Transverse colon (tissue), 4 donors: ENCODE measurements at regions of chr6 and their contacts with region 1.

Region 1: GRCh38 chr6:27132532-27133280 is 114.8 kb upstream of the PRSS16 start:
- DNase-seq: peak; percentile 94
- H3K4me3 ChIP-seq: peak overlapping the region; percentile 32 to 66 (median 50)
- H3K27ac ChIP-seq: peak overlapping the region; percentile 95 to 98 (median 97)
- H3K4me1 ChIP-seq: peaks cover 0 to 23% (median 17%) of the 10 kb centered on the region in 4 donors
- H3K27me3 ChIP-seq: no peaks in the 10 kb centered on the region
- CTCF ChIP-seq: no peak
- EP300 ChIP-seq: no peak
- POLR2A ChIP-seq: peak; percentile 99

Region 2: GRCh38 chr6:26025894-26026832 is 1106.5 kb before region 1 on chr6:
- in situ Hi-C with region 1: loop called in 3 of 4 experiments (anchors 25 kb)
- intact Hi-C with region 1: no loop called
- DNase-seq: peak; percentile 98
- H3K4me3 ChIP-seq: peak overlapping the region; percentile 48 to 66 (median 55)
- H3K27ac ChIP-seq: peak overlapping the region; percentile 90 to 98 (median 96)
- H3K4me1 ChIP-seq: peaks cover 0 to 25% (median 18%) of the 10 kb centered on the region in 4 donors
- H3K27me3 ChIP-seq: no peaks in the 10 kb centered on the region
- CTCF ChIP-seq: peak; percentile 73 to 97 (median 88)
- EP300 ChIP-seq: no peak
- POLR2A ChIP-seq: no peak

Region 3: DNA sequence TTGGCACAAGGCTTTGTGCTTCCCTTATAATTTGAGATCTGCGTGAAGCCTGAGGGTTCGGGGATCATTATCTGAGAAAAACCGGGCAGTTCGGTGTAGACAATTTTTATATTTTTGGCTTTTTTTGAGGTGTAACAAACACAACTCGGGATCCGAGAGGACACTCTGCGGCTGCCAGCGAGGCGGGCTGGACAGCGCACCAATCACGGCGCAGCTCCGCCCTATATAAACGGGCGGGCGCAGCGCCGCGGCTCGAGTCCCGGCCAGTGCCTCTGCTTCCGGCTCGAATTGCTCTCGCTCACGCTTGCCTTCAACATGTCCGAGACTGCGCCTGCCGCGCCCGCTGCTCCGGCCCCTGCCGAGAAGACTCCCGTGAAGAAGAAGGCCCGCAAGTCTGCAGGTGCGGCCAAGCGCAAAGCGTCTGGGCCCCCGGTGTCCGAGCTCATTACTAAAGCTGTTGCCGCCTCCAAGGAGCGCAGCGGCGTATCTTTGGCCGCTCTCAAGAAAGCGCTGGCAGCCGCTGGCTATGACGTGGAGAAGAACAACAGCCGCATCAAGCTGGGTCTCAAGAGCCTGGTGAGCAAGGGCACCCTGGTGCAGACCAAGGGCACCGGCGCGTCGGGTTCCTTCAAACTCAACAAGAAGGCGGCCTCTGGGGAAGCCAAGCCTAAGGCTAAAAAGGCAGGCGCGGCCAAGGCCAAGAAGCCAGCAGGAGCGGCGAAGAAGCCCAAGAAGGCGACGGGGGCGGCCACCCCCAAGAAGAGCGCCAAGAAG is 976.4 kb before region 1 on chr6:
- in situ Hi-C with region 1: loop called in 1 of 4 experiments (anchors 25 kb)
- intact Hi-C with region 1: no loop called
- DNase-seq: peak; percentile 94
- H3K4me3 ChIP-seq: peak overlapping the region; percentile 70 to 91 (median 80)
- H3K27ac ChIP-seq: peak overlapping the region; percentile 97 to 100 (median 100)
- H3K4me1 ChIP-seq: peaks cover 0 to 36% (median 14%) of the 10 kb centered on the region in 4 donors
- H3K27me3 ChIP-seq: no peaks in the 10 kb centered on the region
- CTCF ChIP-seq: no peak
- EP300 ChIP-seq: peak; percentile 71
- POLR2A ChIP-seq: peak; percentile 100

Region 4: DNA sequence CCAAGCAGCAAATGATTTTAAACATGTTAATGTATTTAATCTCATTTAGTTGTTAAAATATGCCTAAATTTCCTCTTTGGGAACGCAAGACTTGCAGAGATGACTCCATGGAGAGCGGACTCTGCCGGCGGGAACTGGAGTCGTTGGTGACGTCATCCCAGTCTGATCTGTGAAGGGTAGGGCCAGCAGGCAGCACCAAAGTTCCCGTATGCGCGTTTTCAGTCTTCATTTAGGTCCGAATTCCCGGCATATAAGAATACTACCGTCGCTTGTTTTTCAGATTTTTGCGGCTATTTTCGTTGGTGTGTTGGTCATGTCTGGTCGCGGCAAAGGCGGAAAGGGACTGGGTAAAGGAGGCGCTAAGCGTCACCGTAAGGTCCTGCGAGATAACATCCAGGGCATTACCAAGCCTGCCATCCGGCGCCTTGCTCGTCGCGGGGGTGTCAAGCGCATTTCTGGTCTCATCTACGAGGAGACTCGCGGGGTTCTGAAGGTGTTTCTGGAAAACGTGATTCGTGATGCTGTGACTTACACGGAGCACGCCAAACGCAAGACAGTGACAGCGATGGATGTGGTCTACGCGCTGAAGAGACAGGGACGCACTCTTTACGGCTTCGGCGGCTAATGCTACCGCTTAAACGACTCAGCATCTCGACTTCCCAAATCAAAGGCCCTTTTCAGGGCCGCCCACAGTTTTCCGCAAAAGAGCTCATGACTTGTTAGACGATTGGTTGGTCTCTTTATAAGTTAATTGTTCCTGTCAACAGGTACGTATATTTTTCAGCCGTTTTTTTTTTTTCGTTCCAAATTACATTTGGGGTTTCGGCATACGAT is 928.2 kb before region 1 on chr6:
- in situ Hi-C with region 1: loop called in 2 of 4 experiments (anchors 25 kb)
- intact Hi-C with region 1: no loop called
- DNase-seq: peak; percentile 95
- H3K4me3 ChIP-seq: peak overlapping the region; percentile 60 to 77 (median 64)
- H3K27ac ChIP-seq: peak overlapping the region; percentile 93 to 100 (median 97)
- H3K4me1 ChIP-seq: peaks cover 0 to 25% (median 13%) of the 10 kb centered on the region in 4 donors
- H3K27me3 ChIP-seq: no peaks in the 10 kb centered on the region
- CTCF ChIP-seq: peak in 4 of 5 experiments; percentile 15 to 55 (median 33)
- EP300 ChIP-seq: peak; percentile 79
- POLR2A ChIP-seq: peak; percentile 100

Region 5: GRCh38 chr6:26327450-26328264 is 805.0 kb before region 1 on chr6:
- in situ Hi-C with region 1: loop called in 1 of 4 experiments (anchors 25 kb)
- intact Hi-C with region 1: no loop called
- DNase-seq: peak; percentile 28
- H3K4me3 ChIP-seq: no peak overlapping the region
- H3K27ac ChIP-seq: no peak overlapping the region
- H3K4me1 ChIP-seq: peaks cover 0 to 11% (median 6%) of the 10 kb centered on the region in 4 donors
- H3K27me3 ChIP-seq: peaks cover 76% of the 10 kb centered on the region
- CTCF ChIP-seq: no peak
- EP300 ChIP-seq: no peak
- POLR2A ChIP-seq: no peak